Left ventricle myocardium superior (tissue), 1 donor: ENCODE measurements at regions of chr11 and their contacts with region 1.

Region 1: GRCh38 chr11:86938900-86939880 is 16.0 kb downstream of the FZD4 start:
- DNase-seq: no peak
- ATAC-seq: no peak

Region 2: GRCh38 chr11:87281496-87281895 is 342.3 kb after region 1 on chr11:
- intact Hi-C with region 1: loop called (anchors 5 kb)
- DNase-seq: no peak
- ATAC-seq: peak; percentile 77

Region 3: GRCh38 chr11:87290304-87290922 is 351.2 kb after region 1 on chr11:
- intact Hi-C with region 1: loop called (anchors 5 kb)
- DNase-seq: no peak
- ATAC-seq: peak; percentile 36